ENCODE measurements at regions of chr19 and their contacts with region 1.

Region 1: GRCh38 chr19:8580710-8581281 is 3.6 kb upstream of the MYO1F start:
- DNase-seq: peak; percentile 88
- ATAC-seq: peak; percentile 76
- H3K4me3 Mint-ChIP-seq: no peak overlapping the region
- H3K27ac Mint-ChIP-seq: no peak overlapping the region
- H3K4me1 Mint-ChIP-seq: peaks cover 20% of the 10 kb centered on the region
- H3K27me3 Mint-ChIP-seq: peaks cover 6% of the 10 kb centered on the region
- CTCF ChIP-seq: peak; percentile 99

Region 2: GRCh38 chr19:8412783-8413628 is 167.8 kb before region 1 on chr19 and contains the start of gene MARCHF2:
- CTCF ChIA-PET with region 1: interaction called, 17 read pairs
- POLR2A ChIA-PET with region 1: no interaction called
- DNase-seq: peak; percentile 96
- ATAC-seq: peak; percentile 99
- H3K4me3 Mint-ChIP-seq: peak within 1 kb of the TSS; percentile 59
- H3K27ac Mint-ChIP-seq: no peak within 1 kb of the TSS
- H3K4me1 Mint-ChIP-seq: peaks cover 4% of the 10 kb centered on the region
- H3K27me3 Mint-ChIP-seq: peaks cover 2% of the 10 kb centered on the region; the same call in 1 of the 2 replicates
- CTCF ChIP-seq: no peak; the same call in 1 of the 2 replicates
- total RNA-seq, gene MARCHF2: 20.2 to 30.4 TPM (median 27.5 TPM) in 3 replicates

Region 3: DNA sequence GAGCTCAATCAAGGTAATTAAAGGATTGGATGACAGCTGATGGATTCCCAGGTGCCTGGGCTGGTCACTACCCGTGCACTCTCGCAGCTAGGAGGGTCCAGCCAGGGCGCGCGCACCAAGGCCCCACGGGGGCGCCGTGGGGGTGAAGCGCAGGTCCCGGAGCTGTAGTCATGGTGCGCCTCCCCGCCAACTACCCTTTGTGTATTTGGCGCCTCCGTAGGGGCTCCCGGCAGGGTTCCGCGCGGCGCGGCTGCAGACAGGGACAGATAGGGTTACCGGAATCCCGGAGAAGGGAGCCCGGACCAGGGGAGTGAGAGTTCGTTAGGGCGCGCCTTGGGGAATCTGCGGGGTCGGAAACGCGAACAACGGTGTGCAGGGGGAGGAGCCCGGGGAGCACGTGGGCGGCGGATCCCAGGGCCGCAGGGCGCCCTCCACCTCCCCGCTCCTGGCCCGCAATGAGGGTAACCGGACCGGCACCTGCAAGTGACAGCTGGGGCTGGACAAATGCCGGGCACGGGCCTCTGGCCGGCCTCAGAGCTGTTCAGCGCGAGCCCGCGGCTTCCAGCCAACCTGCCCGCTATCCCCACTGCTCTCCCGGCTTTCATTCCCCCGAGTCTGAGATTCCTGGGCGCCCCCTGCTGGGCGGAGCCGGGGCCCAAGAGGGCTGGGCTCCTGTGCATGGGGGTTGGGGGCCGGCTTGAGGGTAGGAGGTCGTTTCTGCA is 75.0 kb before region 1 on chr19:
- CTCF ChIA-PET with region 1: interaction called, 18 read pairs
- POLR2A ChIA-PET with region 1: no interaction called
- DNase-seq: peak; percentile 86
- ATAC-seq: peak; percentile 81
- H3K4me3 Mint-ChIP-seq: peak overlapping the region; percentile 84
- H3K27ac Mint-ChIP-seq: 0 out of 2 replicates have a peak overlapping the region, but pooled peaks have one; percentile 60
- H3K4me1 Mint-ChIP-seq: peaks cover 4% of the 10 kb centered on the region; the same call in 1 of the 2 replicates
- H3K27me3 Mint-ChIP-seq: peaks cover 4% of the 10 kb centered on the region; the same call in 1 of the 2 replicates
- CTCF ChIP-seq: peak; percentile 51

Region 4: GRCh38 chr19:8544168-8544567 is 36.6 kb before region 1 on chr19:
- CTCF ChIA-PET with region 1: interaction called, 30 read pairs
- POLR2A ChIA-PET with region 1: no interaction called
- DNase-seq: no peak
- ATAC-seq: no peak
- H3K4me3 Mint-ChIP-seq: no peak overlapping the region
- H3K27ac Mint-ChIP-seq: no peak overlapping the region
- H3K4me1 Mint-ChIP-seq: no peaks in the 10 kb centered on the region
- H3K27me3 Mint-ChIP-seq: no peaks in the 10 kb centered on the region
- CTCF ChIP-seq: no peak

Region 5: GRCh38 chr19:8592231-8593009 is 11.6 kb after region 1 on chr19:
- CTCF ChIA-PET with region 1: interaction called, 54 read pairs
- POLR2A ChIA-PET with region 1: no interaction called
- DNase-seq: peak; percentile 100
- ATAC-seq: peak; percentile 98
- H3K4me3 Mint-ChIP-seq: peak overlapping the region; percentile 74
- H3K27ac Mint-ChIP-seq: no peak overlapping the region
- H3K4me1 Mint-ChIP-seq: peaks cover 9% of the 10 kb centered on the region
- H3K27me3 Mint-ChIP-seq: peaks cover 52% of the 10 kb centered on the region
- CTCF ChIP-seq: no peak

Region 6: GRCh38 chr19:8631425-8631819 is 50.6 kb after region 1 on chr19:
- CTCF ChIA-PET with region 1: interaction called, 14 read pairs
- POLR2A ChIA-PET with region 1: no interaction called
- DNase-seq: no peak
- ATAC-seq: peak; percentile 30; the same call in 1 of the 2 replicates
- H3K4me3 Mint-ChIP-seq: no peak overlapping the region
- H3K27ac Mint-ChIP-seq: no peak overlapping the region
- H3K4me1 Mint-ChIP-seq: peaks cover 19% of the 10 kb centered on the region
- H3K27me3 Mint-ChIP-seq: no peaks in the 10 kb centered on the region
- CTCF ChIP-seq: no peak

Region 7: GRCh38 chr19:8662263-8662662 is 81.5 kb after region 1 on chr19:
- CTCF ChIA-PET with region 1: no interaction called
- POLR2A ChIA-PET with region 1: no interaction called
- DNase-seq: no peak
- ATAC-seq: no peak
- H3K4me3 Mint-ChIP-seq: no peak overlapping the region
- H3K27ac Mint-ChIP-seq: no peak overlapping the region
- H3K4me1 Mint-ChIP-seq: no peaks in the 10 kb centered on the region
- H3K27me3 Mint-ChIP-seq: no peaks in the 10 kb centered on the region; the same call in 1 of the 2 replicates
- CTCF ChIP-seq: no peak

Region 8: DNA sequence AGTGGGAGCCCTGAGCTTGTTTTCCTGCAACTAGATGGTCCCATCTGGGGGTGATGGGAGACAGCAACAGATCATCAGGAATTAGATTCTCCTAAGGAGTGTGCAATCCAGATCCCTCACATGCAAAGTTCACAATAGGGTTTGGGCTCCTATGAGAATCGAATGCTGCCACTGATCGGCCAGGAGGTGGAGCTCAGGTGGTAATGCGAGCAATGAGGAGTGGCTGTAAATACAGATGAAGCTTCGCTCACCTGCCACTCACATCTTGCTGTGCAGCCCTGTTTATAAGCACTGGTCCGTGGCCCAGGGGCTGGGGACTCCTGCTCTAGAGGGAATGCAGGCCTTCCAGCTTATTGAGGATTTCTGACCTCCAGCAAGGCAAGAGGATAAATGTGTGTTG is 245.6 kb after region 1 on chr19:
- CTCF ChIA-PET with region 1: no interaction called
- POLR2A ChIA-PET with region 1: no interaction called
- DNase-seq: no peak
- ATAC-seq: no peak
- H3K4me3 Mint-ChIP-seq: no peak overlapping the region
- H3K27ac Mint-ChIP-seq: no peak overlapping the region
- H3K4me1 Mint-ChIP-seq: no peaks in the 10 kb centered on the region
- H3K27me3 Mint-ChIP-seq: peaks cover 15% of the 10 kb centered on the region
- CTCF ChIP-seq: no peak